CD4-positive, alpha-beta memory T cell (primary cell): ENCODE measurements at regions of chr11 and their contacts with region 1.

Region 1: GRCh38 chr11:6619004-6619745 is at the start of gene TPP1:
- DNase-seq: peak; percentile 88 to 94 (median 91)
- H3K4me3 ChIP-seq: peak within 1 kb of the TSS; percentile 68 to 86
- H3K4me3 Mint-ChIP-seq: no peak within 1 kb of the TSS
- H3K27ac ChIP-seq: peak within 1 kb of the TSS; percentile 90
- H3K27ac Mint-ChIP-seq: no peak within 1 kb of the TSS
- H3K4me1 ChIP-seq: peaks cover 29% of the 10 kb centered on the region
- H3K4me1 Mint-ChIP-seq: peaks cover 6 to 12% (median 9%) of the 10 kb centered on the region in 4 donors
- H3K27me3 ChIP-seq: no peaks in the 10 kb centered on the region
- H3K27me3 Mint-ChIP-seq: no peaks in the 10 kb centered on the region
- total RNA-seq, gene TPP1: 194 to 198 TPM

Region 2: GRCh38 chr11:6531267-6531752 is 87.9 kb before region 1 on chr11:
- CTCF ChIA-PET with region 1: interaction called, 12 read pairs
- POLR2A ChIA-PET with region 1: interaction called, 5 read pairs
- intact Hi-C with region 1: no loop called
- DNase-seq: peak; percentile 46 to 54 (median 50)
- H3K4me3 ChIP-seq: no peak overlapping the region
- H3K4me3 Mint-ChIP-seq: no peak overlapping the region
- H3K27ac ChIP-seq: no peak overlapping the region
- H3K27ac Mint-ChIP-seq: no peak overlapping the region
- H3K4me1 ChIP-seq: peaks cover 7% of the 10 kb centered on the region
- H3K4me1 Mint-ChIP-seq: peaks cover 6 to 14% (median 8%) of the 10 kb centered on the region in 4 donors
- H3K27me3 ChIP-seq: no peaks in the 10 kb centered on the region
- H3K27me3 Mint-ChIP-seq: no peaks in the 10 kb centered on the region

Region 3: DNA sequence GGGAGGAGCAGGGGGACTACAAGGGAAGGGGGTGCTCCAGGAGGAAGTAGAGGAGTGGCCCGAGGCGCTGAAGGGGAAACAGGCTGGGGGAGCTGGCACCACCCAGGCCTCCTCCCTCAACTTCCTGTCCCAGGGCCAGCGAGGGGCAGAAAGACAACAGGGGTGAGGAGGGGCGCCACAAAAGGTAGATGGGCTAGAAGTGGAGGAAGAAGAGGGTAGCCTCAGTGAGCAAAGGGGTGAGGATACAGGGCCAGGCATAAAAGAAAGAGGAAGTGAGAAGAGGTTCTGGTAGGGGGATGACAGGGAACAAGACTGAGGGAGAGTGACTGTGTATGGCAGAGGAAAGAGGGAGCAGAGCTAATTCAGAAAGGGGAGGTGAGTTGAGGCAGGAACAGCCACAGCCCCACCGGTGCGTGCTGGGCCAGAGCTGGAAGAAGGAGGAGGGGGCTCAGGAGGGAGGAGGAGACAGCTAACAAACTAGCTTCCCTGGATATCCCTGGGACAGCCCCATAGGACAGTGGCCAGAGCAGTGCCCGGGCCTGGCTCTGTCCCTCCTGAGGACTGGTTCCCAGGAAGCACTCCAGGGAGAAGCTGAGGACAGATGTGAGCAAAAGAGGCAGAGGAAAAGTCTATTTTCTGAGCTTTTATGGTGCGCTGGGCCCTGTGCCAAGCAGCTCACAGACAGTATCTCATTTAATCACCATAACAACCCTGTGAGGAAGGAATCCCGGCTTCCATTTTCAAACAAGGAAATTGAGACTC is 27.9 kb after region 1 on chr11:
- CTCF ChIA-PET with region 1: interaction called, 13 read pairs
- POLR2A ChIA-PET with region 1: interaction called, 36 read pairs
- intact Hi-C with region 1: loop called (anchors 1 kb)
- DNase-seq: peak in 3 of 5 donors; percentile 22 to 31 (median 22)
- H3K4me3 ChIP-seq: peak overlapping the region; percentile 8 to 26
- H3K4me3 Mint-ChIP-seq: no peak overlapping the region
- H3K27ac ChIP-seq: peak overlapping the region; percentile 54
- H3K27ac Mint-ChIP-seq: no peak overlapping the region
- H3K4me1 ChIP-seq: peaks cover 44% of the 10 kb centered on the region
- H3K4me1 Mint-ChIP-seq: peaks cover 0 to 12% (median 0%) of the 10 kb centered on the region in 4 donors
- H3K27me3 ChIP-seq: no peaks in the 10 kb centered on the region
- H3K27me3 Mint-ChIP-seq: no peaks in the 10 kb centered on the region

Region 4: DNA sequence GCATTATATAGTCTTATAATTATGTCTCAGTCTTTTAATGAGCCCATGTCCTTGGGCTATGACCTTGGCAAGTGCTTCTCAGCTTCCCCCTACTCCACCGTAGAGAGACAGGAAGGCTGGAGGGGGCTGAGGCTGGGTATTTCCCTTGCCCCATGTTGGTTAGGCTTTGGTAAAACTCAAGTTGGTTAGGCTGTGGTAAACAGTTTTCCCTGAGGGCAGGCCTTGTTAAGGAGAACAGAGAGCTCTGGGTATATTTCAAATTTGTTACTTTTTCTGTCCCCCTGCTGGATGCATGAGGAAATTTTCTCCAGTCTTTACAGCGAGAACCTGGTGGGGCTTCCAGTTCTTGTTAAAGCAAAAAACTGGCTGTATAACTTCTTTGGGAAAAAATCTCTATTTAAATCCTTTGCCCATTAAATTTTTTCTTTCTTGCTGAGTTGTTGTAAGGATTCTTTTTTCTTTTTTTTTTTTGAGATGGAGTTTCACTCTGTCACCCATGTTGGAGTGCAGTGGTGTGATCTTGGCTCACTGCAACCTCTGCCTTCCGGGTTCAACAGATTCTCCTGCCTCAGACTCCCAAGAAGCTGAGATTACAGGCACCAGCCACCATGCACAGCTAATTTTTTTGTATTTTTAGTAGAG is 48.7 kb after region 1 on chr11:
- CTCF ChIA-PET with region 1: interaction called, 40 read pairs
- POLR2A ChIA-PET with region 1: interaction called, 41 read pairs
- intact Hi-C with region 1: loop called (anchors 1 kb)
- DNase-seq: peak; percentile 48 to 78 (median 54)
- H3K4me3 ChIP-seq: no peak overlapping the region
- H3K4me3 Mint-ChIP-seq: peak overlapping the region in 7 of 8 donors; percentile 5 to 35 (median 16)
- H3K27ac ChIP-seq: no peak overlapping the region
- H3K27ac Mint-ChIP-seq: peak overlapping the region; percentile 11 to 88 (median 74)
- H3K4me1 ChIP-seq: peaks cover 59% of the 10 kb centered on the region
- H3K4me1 Mint-ChIP-seq: peaks cover 45 to 87% (median 54%) of the 10 kb centered on the region in 4 donors
- H3K27me3 ChIP-seq: no peaks in the 10 kb centered on the region
- H3K27me3 Mint-ChIP-seq: no peaks in the 10 kb centered on the region

Region 5: DNA sequence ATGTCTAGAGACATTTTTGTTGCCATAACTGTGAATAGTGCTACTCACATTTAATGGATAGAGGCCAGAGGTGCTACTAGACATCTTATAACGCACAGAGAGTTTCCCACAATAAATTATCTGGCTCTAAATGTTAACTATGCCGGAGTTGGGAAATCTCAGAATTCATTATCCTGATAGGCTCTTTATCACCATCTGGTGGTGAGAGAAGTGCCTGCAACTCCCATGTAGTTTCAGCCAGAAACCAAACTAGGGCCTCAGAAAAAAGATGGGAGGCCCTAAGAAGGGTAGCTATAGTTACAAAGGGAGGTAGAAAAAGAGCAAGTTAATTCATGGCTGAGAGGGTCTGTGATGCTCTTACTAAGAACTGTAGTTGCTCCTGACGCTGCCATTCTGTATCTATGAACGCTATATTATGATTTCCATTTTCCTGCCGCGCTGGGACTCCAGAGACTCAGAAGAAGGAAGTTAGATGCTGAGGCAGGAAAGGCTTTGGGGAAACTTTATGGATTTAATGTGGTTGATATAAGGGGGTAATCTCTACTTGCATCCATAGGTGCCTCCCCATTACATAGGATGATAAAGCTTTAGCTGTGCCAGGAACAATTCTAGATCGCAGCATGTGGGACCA is 86.8 kb after region 1 on chr11:
- CTCF ChIA-PET with region 1: interaction called, 18 read pairs
- POLR2A ChIA-PET with region 1: no interaction called
- intact Hi-C with region 1: no loop called
- DNase-seq: peak; percentile 38 to 52 (median 46)
- H3K4me3 ChIP-seq: no peak overlapping the region
- H3K4me3 Mint-ChIP-seq: no peak overlapping the region
- H3K27ac ChIP-seq: no peak overlapping the region
- H3K27ac Mint-ChIP-seq: peak overlapping the region; percentile 4 to 84 (median 43)
- H3K4me1 ChIP-seq: no peaks in the 10 kb centered on the region
- H3K4me1 Mint-ChIP-seq: peaks cover 9 to 25% (median 18%) of the 10 kb centered on the region in 4 donors
- H3K27me3 ChIP-seq: no peaks in the 10 kb centered on the region
- H3K27me3 Mint-ChIP-seq: no peaks in the 10 kb centered on the region

Region 6: GRCh38 chr11:6812390-6813005 is 193.3 kb after region 1 on chr11:
- CTCF ChIA-PET with region 1: no interaction called
- POLR2A ChIA-PET with region 1: no interaction called
- intact Hi-C with region 1: no loop called
- DNase-seq: peak; percentile 39 to 51 (median 45)
- H3K4me3 ChIP-seq: no peak overlapping the region
- H3K4me3 Mint-ChIP-seq: peak overlapping the region in 1 of 8 donors; percentile 36
- H3K27ac ChIP-seq: no peak overlapping the region
- H3K27ac Mint-ChIP-seq: no peak overlapping the region
- H3K4me1 ChIP-seq: no peaks in the 10 kb centered on the region
- H3K4me1 Mint-ChIP-seq: peaks cover 0 to 2% (median 0%) of the 10 kb centered on the region in 4 donors
- H3K27me3 ChIP-seq: no peaks in the 10 kb centered on the region
- H3K27me3 Mint-ChIP-seq: peaks cover 27 to 35% of the 10 kb centered on the region in 2 donors